ENCODE measurements at regions of chr9 and their contacts with region 1.

Region 1: GRCh38 chr9:136312436-136312835 is 8.5 kb upstream of the CCDC187 start:
- DNase-seq: no peak
- H3K4me3 ChIP-seq: no peak overlapping the region
- CTCF ChIP-seq: peak; percentile 84

Region 2: DNA sequence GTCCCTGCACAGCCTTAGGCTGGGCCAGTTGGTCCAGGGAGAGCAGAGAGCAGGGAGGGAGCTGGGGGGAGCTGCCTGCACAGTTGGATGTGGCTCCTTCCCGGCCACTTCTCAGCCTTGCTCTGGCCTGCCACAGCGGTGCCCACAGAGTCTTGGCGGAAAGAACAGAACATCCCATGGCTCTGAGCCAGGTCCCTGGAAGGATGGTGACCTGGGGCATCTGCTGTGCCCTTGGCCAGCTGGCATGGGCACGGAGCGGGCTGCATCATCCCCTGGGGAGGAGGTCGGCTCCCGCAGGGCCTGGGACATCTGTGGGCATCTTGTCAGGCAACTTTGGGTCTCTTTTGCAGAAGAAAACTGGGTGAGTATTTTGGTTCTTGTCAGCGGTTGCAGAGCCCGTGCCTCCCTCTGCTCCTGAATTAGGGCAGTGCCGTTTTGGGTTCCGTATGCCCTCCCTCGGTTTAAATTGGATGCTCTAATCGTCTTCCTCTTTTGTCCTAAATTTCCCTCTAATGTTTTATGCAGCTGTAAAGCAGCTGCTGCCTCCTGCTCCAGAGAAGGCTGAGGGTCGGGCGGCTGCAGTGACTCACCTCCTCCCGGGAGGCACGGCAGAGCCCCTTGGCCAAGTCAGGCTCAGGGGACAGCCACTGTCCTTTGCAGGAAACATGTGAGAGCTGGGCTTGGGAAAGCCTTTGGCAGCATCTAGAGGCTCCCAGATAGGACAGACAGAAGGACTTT is 206.9 kb before region 1 on chr9:
- CTCF ChIA-PET with region 1: no interaction called
- POLR2A ChIA-PET with region 1: no interaction called
- DNase-seq: no peak
- H3K4me3 ChIP-seq: no peak overlapping the region
- CTCF ChIP-seq: no peak

Region 3: DNA sequence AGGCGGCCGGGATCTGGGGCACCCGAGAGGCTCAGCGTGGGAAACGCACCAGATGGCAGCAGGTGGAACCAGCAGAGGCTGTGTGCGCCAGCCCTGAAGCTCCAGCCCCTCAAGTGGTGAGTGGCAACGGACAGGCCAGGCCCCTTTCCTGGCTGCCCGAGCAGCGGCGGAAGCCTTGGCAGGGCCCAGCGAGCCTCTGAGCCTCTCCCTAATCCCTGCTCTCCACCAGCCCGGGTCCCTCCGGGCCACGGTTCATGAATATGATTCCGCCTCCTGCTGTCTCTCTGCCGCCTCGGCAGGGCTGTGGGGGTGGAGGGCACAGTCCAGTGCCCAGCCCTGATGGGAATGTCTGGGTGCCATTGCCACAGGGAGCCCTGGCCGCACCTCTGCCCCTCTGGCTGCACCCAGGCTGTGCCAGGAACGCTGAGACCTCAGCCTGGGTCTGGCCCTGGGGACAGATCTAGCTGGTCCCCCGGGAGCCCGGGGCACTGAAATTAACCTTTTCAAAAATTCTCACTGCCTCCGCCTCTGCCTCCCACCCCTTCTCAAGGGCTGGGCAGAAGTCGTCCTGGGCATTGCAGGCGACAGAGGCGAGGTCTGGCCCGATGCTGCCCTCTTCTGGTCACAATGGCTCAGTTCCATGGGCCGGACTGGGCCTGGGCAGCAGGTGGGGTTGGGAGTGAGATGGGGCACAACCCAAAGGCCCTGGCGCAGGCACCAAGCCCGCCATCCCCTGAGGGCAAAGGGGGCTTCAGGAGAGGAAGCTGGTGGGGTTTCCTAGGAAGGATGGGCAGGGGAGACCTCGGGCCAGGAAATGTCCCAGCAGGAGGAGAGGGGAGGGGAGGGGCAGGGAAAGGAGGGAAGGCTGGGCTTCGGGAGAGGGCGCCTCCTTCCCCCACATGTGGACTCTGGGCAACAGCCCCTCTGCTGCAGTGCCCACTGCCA is 28.9 kb before region 1 on chr9:
- CTCF ChIA-PET with region 1: no interaction called
- POLR2A ChIA-PET with region 1: no interaction called
- DNase-seq: no peak
- H3K4me3 ChIP-seq: no peak overlapping the region
- CTCF ChIP-seq: peak; percentile 93

Region 4: GRCh38 chr9:136363606-136364370 is 51.4 kb after region 1 on chr9 and contains the start of gene DNLZ:
- CTCF ChIA-PET with region 1: interaction called, 93 read pairs
- POLR2A ChIA-PET with region 1: no interaction called
- DNase-seq: no peak
- H3K4me3 ChIP-seq: peak within 1 kb of the TSS; percentile 77
- CTCF ChIP-seq: peak; percentile 93

Region 5: DNA sequence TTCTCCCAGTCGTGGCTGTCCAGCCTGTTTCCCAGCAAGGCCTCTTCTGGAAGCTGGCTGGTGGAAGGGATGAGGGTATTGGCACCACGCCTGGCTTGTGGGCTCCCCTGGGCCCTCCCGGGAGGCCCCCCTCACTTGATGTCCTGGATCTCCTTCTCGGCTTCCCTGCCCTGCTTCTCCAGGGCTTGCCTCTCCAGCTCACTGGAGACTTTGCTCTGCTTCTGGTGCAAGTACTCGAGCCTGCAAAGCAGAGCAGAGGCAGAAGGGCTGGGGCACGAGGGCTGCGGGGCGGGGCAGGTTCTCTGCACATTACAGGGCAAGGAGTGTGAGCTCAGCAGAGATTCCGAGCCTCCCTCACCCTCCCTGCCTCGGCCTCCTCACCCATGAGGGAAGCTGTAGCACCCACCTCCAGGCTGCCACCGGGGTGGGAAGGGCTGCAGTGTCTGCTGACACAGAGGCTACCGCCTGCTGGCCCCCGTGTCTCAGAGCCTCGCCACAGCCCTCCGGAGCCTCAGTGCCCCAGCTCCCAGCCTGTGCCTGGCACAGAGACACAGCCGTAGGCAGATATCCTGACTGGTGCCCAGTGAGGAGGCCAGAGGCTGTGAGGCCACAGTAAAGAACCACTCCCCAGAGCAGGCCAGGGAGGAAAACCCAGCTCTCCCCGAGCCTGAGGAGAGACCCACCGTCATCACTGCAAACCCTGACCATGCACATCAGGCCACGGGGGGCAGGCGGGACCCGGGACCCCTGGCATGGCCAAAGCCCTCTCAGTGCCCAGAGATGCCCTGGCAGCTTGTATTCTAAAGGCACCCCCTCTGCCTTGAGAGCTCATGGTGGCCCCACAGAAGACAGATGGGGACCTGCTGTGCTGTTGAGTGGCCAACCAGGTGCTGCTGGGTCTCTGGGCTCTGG is 80.4 kb after region 1 on chr9:
- CTCF ChIA-PET with region 1: interaction called, 142 read pairs
- POLR2A ChIA-PET with region 1: no interaction called
- DNase-seq: no peak
- H3K4me3 ChIP-seq: no peak overlapping the region
- CTCF ChIP-seq: no peak

Region 6: GRCh38 chr9:136410500-136411287 is 98.3 kb after region 1 on chr9 and contains the starts of genes ENTR1 and PMPCA:
- CTCF ChIA-PET with region 1: interaction called, 22 read pairs
- POLR2A ChIA-PET with region 1: no interaction called
- DNase-seq: peak; percentile 10
- H3K4me3 ChIP-seq: peak within 1 kb of the TSS; percentile 95
- CTCF ChIP-seq: no peak